GM10248 (cell line): ENCODE measurements at regions of chr5 and their contacts with region 1.

Region 1: DNA sequence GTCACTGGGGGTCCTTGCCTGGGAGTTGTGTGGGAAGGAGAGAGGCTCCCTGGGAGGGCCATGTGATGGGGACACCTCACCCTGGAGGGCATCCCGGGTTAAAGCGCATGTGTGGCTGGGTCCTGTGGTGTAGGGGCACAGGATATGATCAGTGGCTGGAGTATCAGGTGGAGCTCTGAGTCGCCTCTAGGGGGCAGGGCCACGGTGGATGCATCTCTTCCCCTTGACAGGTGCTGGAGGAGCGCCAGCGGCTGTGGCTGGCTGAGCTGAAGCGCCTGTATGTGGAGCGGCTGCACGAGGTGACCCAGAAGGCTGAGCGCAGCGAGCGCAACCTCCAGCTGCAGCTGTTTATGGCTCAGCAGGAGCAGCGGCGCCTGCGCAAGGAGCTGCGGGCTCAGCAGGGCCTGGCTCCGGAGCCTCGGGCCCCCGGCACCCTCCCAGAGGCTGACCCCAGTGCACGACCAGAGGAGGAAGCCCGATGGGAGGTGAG is 7.6 kb downstream of the N4BP3 start:
- DNase-seq: peak; percentile 88
- CTCF ChIP-seq: peak; percentile 81

Region 2: DNA sequence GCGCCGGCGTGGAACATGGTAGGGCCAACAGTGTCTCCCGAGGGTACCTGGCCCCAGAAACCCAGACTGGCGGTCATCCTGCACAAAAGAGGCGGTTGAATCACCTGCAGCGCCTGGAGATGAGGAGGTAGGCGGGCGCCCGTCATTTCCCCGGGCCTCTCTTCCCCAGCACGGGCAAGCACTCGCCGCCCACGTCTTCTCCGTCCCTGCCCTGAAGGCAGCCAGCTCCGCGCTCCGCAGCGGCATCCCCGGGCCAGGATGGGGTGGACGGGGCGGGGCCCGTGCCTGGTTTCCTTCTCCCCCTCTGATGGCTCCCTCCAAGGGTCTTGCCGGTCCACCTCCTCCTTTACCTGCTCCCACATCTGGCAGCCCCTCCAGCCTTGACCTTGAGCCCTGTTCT is 34.6 kb before region 1 on chr5:
- CTCF ChIA-PET with region 1: interaction called, 10 read pairs
- POLR2A ChIA-PET with region 1: no interaction called
- DNase-seq: no peak
- CTCF ChIP-seq: no peak

Region 3: DNA sequence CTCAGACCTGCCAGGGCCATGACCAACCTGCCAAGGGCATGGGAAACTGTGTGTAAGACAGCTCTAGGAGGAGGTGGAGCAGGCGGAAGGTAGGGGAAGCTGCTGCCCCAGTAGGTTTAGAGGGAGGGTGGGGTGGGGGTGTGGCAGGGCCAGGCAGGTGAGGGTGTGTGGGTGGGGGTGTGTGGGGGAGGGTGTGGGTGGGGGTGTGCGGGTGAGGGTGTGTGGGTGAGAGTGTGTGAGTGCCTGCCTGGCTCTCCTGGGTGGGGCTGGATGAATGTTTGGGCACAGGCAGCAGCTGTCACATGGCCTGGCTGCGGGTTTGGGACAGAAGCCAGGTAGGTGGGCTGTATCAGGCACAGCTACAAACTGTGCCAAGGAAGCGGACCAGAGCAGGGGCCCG is 16.4 kb before region 1 on chr5:
- CTCF ChIA-PET with region 1: interaction called, 30 read pairs
- POLR2A ChIA-PET with region 1: no interaction called
- DNase-seq: no peak
- CTCF ChIP-seq: no peak

Region 4: DNA sequence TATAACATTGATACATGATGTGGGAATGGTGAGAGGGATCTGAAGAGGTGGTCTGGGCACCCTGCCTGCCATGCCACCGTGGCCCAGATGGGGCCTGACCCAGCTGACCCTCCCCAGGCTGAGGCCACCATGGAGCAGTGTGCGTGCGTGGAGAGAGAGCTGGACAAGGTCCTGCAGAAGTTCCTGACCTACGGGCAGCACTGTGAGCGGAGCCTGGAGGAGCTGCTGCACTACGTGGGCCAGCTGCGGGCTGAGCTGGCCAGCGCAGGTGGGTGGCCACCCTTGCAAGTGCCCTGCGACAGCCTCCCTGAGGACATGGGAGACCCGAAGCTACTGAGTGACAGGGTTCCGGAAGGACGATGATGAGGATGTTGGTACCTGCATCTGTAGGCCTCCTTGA is 17.1 kb after region 1 on chr5:
- CTCF ChIA-PET with region 1: interaction called, 42 read pairs
- POLR2A ChIA-PET with region 1: no interaction called
- DNase-seq: no peak
- CTCF ChIP-seq: no peak

Region 5: GRCh38 chr5:178146020-178146820 is 25.3 kb after region 1 on chr5:
- CTCF ChIA-PET with region 1: interaction called, 42 read pairs
- POLR2A ChIA-PET with region 1: interaction called, 3 read pairs
- DNase-seq: peak; percentile 82
- CTCF ChIP-seq: peak; percentile 91

Region 6: GRCh38 chr5:178153573-178154343 is 32.8 kb after region 1 on chr5 and contains the start of gene NHP2:
- CTCF ChIA-PET with region 1: interaction called, 17 read pairs
- POLR2A ChIA-PET with region 1: interaction called, 3 read pairs
- DNase-seq: peak; percentile 98
- CTCF ChIP-seq: no peak

Region 7: DNA sequence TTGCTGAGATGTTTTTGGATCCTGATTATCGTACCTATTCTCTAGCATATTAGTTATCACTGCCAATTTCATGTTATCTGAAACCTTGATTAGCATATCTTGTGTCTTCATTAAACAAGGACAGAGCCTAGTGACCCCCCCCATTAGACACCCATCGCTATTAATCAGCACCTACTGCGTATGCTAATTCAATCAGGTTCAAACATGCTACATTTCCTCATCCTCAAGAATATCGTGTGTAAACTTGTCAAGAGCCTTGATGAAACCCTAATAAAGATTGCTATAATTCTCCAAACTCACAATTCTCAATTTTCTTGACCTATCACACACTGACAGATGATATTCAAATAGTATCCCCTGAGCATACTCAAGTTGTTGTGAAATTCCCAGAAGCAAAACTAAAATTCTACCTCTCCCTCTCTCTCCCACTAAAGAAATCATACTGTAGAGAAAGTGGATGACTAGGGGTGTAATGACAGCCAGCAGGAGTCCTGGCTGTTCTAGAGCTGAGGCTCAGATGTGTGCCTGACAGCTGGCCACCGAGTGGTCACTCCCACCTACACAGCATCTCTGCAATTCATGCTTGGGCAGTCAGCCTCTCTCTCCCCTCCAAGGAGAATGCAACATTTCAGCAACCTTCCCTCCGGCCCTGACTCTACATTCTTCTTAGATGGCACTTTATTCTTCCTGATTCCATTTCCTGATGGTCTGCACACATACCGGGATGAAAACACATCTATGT is 618.7 kb after region 1 on chr5:
- CTCF ChIA-PET with region 1: no interaction called
- POLR2A ChIA-PET with region 1: no interaction called
- DNase-seq: no peak
- CTCF ChIP-seq: no peak